ENCODE measurements at regions of chr15 and their contacts with region 1.

Region 1: GRCh38 chr15:96330450-96331145 is at the start of gene NR2F2:
- DNase-seq: peak; percentile 94
- H3K4me3 ChIP-seq: peak within 1 kb of the TSS; percentile 55 to 86 (median 74)
- H3K27ac ChIP-seq: peak within 1 kb of the TSS; percentile 94 to 98 (median 97)
- H3K4me1 ChIP-seq: peaks cover 0 to 33% (median 14%) of the 10 kb centered on the region in 4 donors
- H3K27me3 ChIP-seq: peaks cover 17% of the 10 kb centered on the region
- CTCF ChIP-seq: no peak
- EP300 ChIP-seq: no peak
- POLR2A ChIP-seq: peak; percentile 95
- total RNA-seq, gene NR2F2: 11.3 to 29.5 (median 18.4) TPM

Region 2: DNA sequence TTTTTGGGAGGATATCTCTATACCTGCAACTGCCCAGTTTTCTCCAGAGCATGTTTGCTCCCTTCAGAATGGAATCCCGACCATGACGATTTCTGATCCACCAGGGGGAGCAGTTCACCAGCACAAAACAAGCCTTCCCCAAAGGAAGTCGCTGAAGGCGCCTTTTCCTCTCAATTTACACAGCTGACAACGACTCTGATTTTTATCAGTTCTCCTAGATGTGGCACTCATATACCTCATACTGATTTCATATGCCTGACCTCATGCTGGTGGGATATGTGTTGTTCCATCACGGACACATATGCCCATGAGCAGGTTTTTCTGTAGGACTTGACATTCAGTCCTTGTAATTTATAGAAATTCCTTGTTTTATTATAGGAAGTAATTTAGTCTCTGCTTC is 1071.1 kb before region 1 on chr15:
- in situ Hi-C with region 1: loop called in 3 of 4 experiments (anchors 10 to 25 kb)
- intact Hi-C with region 1: no loop called
- DNase-seq: peak; percentile 49
- H3K4me3 ChIP-seq: no peak overlapping the region
- H3K27ac ChIP-seq: no peak overlapping the region
- H3K4me1 ChIP-seq: peaks cover 0 to 7% (median 3%) of the 10 kb centered on the region in 4 donors
- H3K27me3 ChIP-seq: no peaks in the 10 kb centered on the region
- CTCF ChIP-seq: peak; percentile 62 to 70 (median 68)
- EP300 ChIP-seq: no peak
- POLR2A ChIP-seq: no peak

Region 3: GRCh38 chr15:95826412-95827195 is 504.0 kb before region 1 on chr15:
- in situ Hi-C with region 1: no loop called
- intact Hi-C with region 1: no loop called
- DNase-seq: no peak
- H3K4me3 ChIP-seq: no peak overlapping the region
- H3K27ac ChIP-seq: no peak overlapping the region
- H3K4me1 ChIP-seq: no peaks in the 10 kb centered on the region
- H3K27me3 ChIP-seq: no peaks in the 10 kb centered on the region
- CTCF ChIP-seq: no peak
- EP300 ChIP-seq: no peak
- POLR2A ChIP-seq: no peak

Region 4: GRCh38 chr15:96254168-96254567 is 76.4 kb before region 1 on chr15:
- in situ Hi-C with region 1: no loop called
- intact Hi-C with region 1: no loop called
- DNase-seq: no peak
- H3K4me3 ChIP-seq: no peak overlapping the region
- H3K27ac ChIP-seq: no peak overlapping the region
- H3K4me1 ChIP-seq: no peaks in the 10 kb centered on the region
- H3K27me3 ChIP-seq: no peaks in the 10 kb centered on the region
- CTCF ChIP-seq: no peak
- EP300 ChIP-seq: no peak
- POLR2A ChIP-seq: no peak

Region 5: GRCh38 chr15:96431787-96432186 is 101.2 kb after region 1 on chr15:
- in situ Hi-C with region 1: no loop called
- intact Hi-C with region 1: no loop called
- DNase-seq: no peak
- H3K4me3 ChIP-seq: no peak overlapping the region
- H3K27ac ChIP-seq: no peak overlapping the region
- H3K4me1 ChIP-seq: no peaks in the 10 kb centered on the region
- H3K27me3 ChIP-seq: peaks cover 9% of the 10 kb centered on the region
- CTCF ChIP-seq: no peak
- EP300 ChIP-seq: no peak
- POLR2A ChIP-seq: no peak